ENCODE measurements at regions of chr9 and their contacts with region 1.

Region 1: GRCh38 chr9:128504485-128505413 is at the start of gene GLE1:
- DNase-seq: peak; percentile 93 to 99 (median 97)
- ATAC-seq: peak; percentile 94
- H3K4me3 ChIP-seq: peak within 1 kb of the TSS; percentile 99
- H3K4me3 Mint-ChIP-seq: peak within 1 kb of the TSS; percentile 100
- H3K27ac ChIP-seq: peak within 1 kb of the TSS; percentile 80 to 92
- H3K27ac Mint-ChIP-seq: peak within 1 kb of the TSS; percentile 97
- H3K4me1 ChIP-seq: peaks cover 27% of the 10 kb centered on the region
- H3K4me1 Mint-ChIP-seq: peaks cover 41% of the 10 kb centered on the region
- H3K27me3 ChIP-seq: no peaks in the 10 kb centered on the region
- H3K27me3 Mint-ChIP-seq: no peaks in the 10 kb centered on the region
- CTCF ChIP-seq: no peak
- total RNA-seq, gene GLE1: 8.0 to 8.4 TPM

Region 2: GRCh38 chr9:128455849-128456612 is 48.7 kb before region 1 on chr9 and contains the start of gene ODF2:
- CTCF ChIA-PET with region 1: no interaction called
- POLR2A ChIA-PET with region 1: interaction called, 7 read pairs
- intact Hi-C with region 1: loop called (anchors 1 kb)
- DNase-seq: peak; percentile 97 to 99 (median 98)
- ATAC-seq: peak; percentile 90
- H3K4me3 ChIP-seq: peak within 1 kb of the TSS; percentile 91
- H3K4me3 Mint-ChIP-seq: peak within 1 kb of the TSS; percentile 91
- H3K27ac ChIP-seq: peak within 1 kb of the TSS; percentile 83 to 86
- H3K27ac Mint-ChIP-seq: peak within 1 kb of the TSS; percentile 89
- H3K4me1 ChIP-seq: peaks cover 19% of the 10 kb centered on the region
- H3K4me1 Mint-ChIP-seq: peaks cover 11% of the 10 kb centered on the region
- H3K27me3 ChIP-seq: no peaks in the 10 kb centered on the region
- H3K27me3 Mint-ChIP-seq: no peaks in the 10 kb centered on the region
- CTCF ChIP-seq: no peak
- total RNA-seq, gene ODF2: 18.3 to 21.3 TPM

Measured in CD4-positive, alpha-beta T cell (primary cell).